ENCODE measurements at regions of chr5 and their contacts with region 1.

Region 1: DNA sequence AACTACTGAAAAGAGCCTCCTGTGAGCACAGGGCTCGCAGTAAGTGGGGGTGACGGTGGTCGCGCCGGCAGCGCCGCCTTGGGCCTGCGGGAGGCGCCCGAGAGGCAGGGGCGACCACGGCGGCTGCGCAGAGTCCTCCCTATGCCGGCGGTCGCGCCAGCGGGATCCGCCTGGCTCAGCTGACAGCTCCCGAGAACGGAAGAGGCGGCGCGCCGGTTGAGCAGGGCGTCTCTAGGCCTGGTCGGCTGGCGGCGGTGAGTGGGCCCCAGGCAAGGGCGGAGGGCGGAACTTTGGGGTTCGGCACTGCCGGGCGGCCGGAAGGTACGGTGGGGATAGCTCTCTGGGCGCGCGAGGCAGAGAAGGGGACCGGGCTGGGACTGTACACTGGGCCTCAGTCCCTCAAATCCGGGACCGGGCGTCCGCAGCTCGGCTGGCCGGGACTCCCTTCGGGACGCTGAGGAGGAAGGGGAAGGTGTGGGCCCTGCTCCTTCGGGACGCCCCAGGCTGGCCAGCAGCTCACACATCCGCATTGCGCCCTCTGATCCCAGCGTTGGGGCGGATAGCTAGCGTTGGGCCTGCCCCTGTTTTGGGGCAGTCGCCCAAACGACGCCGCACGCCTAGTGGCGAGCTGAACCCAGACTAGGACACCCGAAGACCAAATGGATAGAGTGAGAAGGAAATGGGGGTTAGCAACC is at the start of gene RNF14:
- DNase-seq: peak; percentile 95
- CTCF ChIP-seq: peak; percentile 87

Region 2: DNA sequence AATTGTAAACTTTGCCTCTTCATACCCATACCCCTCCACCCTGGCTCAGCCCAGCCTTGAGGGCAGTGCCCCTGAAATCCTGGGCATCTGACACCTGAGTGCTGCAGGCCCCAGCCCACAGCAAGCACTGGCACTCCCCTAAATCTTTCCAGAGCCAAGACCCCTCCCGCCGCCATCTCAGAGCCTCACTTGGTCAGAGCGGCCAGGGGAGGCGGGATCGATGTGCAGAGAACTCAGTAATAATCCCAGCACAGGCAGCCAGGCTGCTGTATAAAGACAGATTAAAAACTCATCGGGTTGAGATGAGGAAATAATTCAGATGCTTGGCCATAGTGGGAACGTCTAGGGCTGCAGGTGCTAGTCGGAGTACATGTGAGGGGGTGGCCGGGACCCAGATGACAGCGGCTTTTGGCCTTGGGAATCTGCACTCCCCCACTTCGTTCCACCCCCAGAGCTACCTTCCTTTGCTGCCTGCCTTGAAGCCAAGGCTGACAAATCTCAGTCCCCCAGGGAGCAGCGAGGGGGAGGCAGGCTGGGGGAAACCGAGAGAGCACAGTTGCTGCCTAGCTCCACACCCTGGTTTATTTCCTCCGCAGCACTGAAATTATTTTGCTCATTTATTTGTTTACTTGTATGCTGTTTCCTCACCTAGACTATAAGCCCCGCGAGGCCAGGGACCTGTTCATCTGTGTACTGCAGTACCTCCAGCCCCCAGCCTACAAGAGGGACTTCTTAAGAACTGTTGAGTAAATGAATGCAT is 267.5 kb before region 1 on chr5:
- CTCF ChIA-PET with region 1: interaction called, 14 read pairs
- POLR2A ChIA-PET with region 1: no interaction called
- DNase-seq: peak; percentile 54
- CTCF ChIP-seq: no peak

Region 3: GRCh38 chr5:141923448-141924352 is 45.4 kb before region 1 on chr5 and contains the start of gene DELE1:
- CTCF ChIA-PET with region 1: interaction called, 14 read pairs
- POLR2A ChIA-PET with region 1: interaction called, 15 read pairs
- DNase-seq: peak; percentile 95
- CTCF ChIP-seq: no peak

Region 4: GRCh38 chr5:141986072-141986471 is 17.0 kb after region 1 on chr5:
- CTCF ChIA-PET with region 1: interaction called, 26 read pairs
- POLR2A ChIA-PET with region 1: no interaction called
- DNase-seq: no peak
- CTCF ChIP-seq: no peak

Region 5: GRCh38 chr5:142012792-142013388 is 43.8 kb after region 1 on chr5 and contains the start of gene GNPDA1:
- CTCF ChIA-PET with region 1: interaction called, 52 read pairs
- POLR2A ChIA-PET with region 1: interaction called, 3 read pairs
- DNase-seq: peak; percentile 87
- CTCF ChIP-seq: no peak